ENCODE measurements at regions of chr5 and their contacts with region 1.

Region 1: DNA sequence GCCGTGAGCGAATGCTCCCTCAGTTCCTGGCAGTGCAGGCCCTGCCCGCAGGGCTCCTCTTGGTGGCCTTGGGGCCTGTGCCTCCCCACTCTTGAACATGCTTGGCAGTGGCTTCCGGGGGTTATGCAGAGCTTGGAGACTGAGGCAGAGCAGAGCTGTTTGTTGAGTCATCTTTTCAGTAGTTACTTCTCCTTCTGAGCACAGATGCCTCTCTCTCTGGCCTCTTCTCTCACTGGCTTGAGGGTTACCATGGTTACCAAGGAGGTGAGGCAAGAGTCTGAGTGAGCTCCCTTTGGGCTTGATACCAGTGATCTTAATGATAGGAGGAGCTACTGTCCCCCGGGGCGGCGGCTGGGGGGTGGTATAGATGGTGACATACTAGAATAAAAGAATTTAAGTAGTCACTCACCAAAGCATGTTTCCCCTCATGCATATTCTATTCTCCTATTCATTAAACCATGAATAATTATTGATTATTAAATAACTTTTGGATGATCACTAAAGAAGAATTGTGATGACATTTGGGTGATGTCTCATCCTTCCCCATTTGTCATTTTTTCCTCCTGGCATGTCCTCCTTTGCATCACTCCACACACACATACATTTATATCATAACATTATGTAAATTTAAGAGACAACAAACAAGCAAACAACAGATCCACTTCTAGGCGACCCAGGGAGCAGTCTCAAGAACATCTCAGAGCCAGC is 111.1 kb downstream of the ARHGAP26 start:
- DNase-seq: no peak
- H3K4me3 ChIP-seq: no peak overlapping the region
- H3K27ac ChIP-seq: no peak overlapping the region
- H3K4me1 ChIP-seq: no peaks in the 10 kb centered on the region
- H3K27me3 ChIP-seq: no peaks in the 10 kb centered on the region
- CTCF ChIP-seq: no peak

Region 2: DNA sequence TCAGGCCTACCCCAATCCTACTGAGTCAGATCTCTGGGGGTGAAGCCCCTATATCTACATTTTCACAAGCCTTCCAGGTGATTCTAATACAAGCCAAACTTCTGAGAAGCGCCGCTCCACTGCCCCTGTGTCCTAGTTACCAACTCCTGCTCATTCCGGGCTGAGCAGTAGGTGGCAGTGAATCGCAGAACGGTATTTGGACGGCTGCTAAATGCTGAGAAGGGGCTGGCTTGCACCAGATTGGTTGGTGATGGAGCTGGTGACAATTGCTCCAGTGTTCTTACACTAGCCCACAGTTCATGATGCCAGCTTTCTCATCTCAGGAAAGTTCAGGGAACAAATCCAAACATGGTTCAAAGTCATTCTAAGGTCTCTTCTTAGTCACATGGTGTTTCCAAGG is 164.3 kb before region 1 on chr5:
- intact Hi-C with region 1: loop called (anchors 5 kb)
- DNase-seq: peak; percentile 43
- H3K4me3 ChIP-seq: no peak overlapping the region
- H3K27ac ChIP-seq: no peak overlapping the region
- H3K4me1 ChIP-seq: no peaks in the 10 kb centered on the region
- H3K27me3 ChIP-seq: no peaks in the 10 kb centered on the region
- CTCF ChIP-seq: no peak

Region 3: DNA sequence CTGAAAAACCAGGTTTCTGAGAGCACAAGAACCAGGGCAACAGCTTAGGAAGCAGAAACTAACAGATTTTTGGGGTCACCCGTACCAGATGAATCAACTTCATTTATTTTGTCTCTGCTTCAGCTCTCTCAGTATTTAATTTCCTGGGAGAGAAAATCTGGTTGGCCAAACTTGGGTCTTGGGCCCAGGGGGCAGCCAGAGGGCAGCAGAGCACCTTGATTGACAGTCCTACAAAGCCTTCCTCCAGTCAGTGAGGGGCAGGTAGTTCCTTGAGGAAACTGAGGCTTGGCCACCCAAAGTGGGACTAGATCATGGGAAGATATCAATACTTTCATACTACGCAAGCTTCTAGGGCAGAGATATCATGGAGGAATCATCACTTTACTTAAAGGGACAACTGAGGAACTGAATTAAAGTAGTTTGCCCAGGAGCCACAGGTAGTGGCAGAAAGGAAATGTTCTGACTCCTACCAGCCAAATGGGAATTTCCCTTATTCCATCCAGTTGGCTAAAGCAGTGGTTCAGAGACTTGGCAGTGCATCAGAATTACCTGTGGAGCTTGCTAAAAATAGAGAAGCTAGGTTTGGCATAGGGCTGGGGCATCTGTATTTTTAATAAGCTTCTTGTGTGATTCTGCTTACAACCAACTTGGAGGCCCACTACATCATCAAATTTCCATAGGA is 132.5 kb before region 1 on chr5:
- intact Hi-C with region 1: loop called (anchors 2 kb)
- DNase-seq: peak; percentile 56
- H3K4me3 ChIP-seq: no peak overlapping the region
- H3K27ac ChIP-seq: no peak overlapping the region
- H3K4me1 ChIP-seq: no peaks in the 10 kb centered on the region
- H3K27me3 ChIP-seq: no peaks in the 10 kb centered on the region
- CTCF ChIP-seq: peak; percentile 44

Region 4: DNA sequence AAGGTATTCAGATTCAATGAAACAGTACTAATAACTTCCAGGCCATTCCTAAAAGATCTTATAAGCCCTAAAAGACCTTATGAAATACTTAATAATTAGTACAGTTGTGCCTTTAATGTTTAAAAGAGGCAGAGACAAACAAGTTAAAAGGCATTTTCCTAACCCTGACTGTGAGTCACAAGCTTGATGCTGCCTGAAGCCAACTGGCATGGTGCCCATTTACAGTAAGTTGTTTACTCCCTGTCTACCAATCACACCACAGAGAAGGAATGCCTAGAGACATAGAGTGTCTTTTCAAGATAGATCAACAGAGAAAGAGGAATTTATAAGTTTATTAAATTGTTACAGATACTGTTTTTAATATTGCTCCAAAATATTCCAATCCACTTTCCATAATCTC is 474.5 kb after region 1 on chr5:
- intact Hi-C with region 1: no loop called
- DNase-seq: peak; percentile 50
- H3K4me3 ChIP-seq: no peak overlapping the region
- H3K27ac ChIP-seq: no peak overlapping the region
- H3K4me1 ChIP-seq: no peaks in the 10 kb centered on the region
- H3K27me3 ChIP-seq: no peaks in the 10 kb centered on the region
- CTCF ChIP-seq: no peak